ENCODE measurements at regions of chr18 and their contacts with region 1.

Region 1: DNA sequence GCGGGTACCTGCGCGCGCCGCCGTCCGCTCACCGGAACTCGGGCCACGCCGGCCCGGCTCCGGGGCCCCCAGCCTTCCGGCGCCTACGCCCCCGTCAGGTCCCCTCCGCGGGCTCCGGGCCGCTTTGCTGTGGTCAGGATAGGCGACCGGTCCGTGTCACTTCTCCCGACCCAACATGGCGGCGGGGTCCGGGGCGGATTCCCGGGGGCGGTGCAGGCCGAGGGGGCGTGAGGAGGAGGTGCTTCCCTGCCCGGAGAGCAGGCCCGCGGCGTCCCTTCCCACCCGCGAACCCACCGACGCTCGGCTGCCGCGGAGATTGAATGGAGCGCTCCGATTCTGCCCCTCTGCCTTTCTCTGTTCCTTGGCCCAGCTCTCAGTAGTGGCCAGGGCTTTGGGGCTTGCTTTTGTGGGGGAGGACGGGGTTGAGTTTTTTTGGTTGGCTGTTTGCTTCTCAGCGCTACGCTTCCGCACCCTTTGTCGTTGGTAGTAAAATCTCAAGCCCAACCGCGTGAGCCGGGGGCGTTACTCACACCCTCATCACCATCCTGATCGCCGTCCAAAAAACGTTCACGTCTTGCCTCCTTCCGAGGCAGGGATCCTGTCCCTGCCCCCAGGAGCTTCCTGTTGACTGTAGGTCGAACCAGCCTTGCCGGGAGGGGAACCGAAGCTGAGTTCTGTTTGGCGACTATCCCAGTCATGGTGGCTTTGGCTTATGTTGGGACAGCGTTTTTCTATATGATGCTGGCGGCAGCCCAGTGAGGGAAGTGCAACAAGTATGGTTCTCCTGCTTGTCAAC is 532 bp upstream of the YES1 start:
- DNase-seq: peak; percentile 55 to 93 (median 79)
- ATAC-seq: peak; percentile 68
- H3K4me3 ChIP-seq: peak overlapping the region; percentile 80 to 90
- H3K4me3 Mint-ChIP-seq: peak overlapping the region; percentile 93
- H3K27ac ChIP-seq: peak overlapping the region; percentile 81 to 98
- H3K27ac Mint-ChIP-seq: peak overlapping the region; percentile 98
- H3K4me1 ChIP-seq: peaks cover 55% of the 10 kb centered on the region
- H3K4me1 Mint-ChIP-seq: peaks cover 71% of the 10 kb centered on the region
- H3K27me3 ChIP-seq: no peaks in the 10 kb centered on the region
- H3K27me3 Mint-ChIP-seq: no peaks in the 10 kb centered on the region
- CTCF ChIP-seq: no peak

Region 2: DNA sequence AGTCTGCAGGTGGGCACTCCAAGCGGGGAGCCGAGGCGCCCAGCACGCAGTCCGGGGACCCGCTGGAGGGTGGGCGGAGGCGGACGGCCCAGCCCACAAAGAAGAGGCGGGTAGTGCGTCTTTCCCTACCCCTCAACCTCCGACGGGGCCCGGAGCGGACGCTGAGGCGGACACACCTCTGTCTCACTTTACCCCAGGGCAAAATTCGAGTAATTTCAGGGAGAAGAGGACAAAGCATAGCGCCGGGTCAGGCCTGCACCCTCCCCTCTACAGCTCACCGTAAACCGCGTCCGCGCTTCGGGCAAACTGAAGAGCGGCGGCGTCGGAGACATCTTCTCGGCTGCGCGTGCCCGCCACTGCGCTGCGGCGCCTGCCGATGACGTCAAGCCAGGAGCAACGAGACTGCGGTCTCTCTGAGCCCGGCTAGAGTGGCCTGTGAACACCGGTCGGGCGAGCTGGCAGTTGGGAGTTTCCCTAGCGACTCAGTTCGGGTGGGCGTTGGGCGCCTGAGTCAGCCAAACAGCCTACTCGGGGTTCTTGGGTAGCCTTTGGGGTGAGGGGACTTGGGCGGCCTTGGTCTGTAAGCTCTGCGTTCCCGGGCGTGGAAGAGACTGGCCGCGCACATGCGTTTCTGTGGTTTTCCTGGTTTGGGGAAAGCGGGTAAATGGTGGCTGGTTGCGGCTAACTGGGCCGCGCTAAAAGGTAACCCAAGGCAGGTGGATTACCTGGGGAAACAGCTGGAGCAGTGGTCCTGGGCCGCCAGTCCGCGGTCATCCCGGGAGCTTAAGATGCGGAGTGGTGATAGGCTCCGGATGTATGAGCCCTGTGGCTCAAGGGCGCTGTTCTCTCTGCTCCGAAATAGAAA is 544.7 kb before region 1 on chr18 and contains the start of gene THOC1:
- CTCF ChIA-PET with region 1: no interaction called
- POLR2A ChIA-PET with region 1: no interaction called
- intact Hi-C with region 1: loop called (anchors 5 to 10 kb)
- DNase-seq: peak; percentile 87 to 96 (median 95)
- ATAC-seq: peak; percentile 90
- H3K4me3 ChIP-seq: peak within 1 kb of the TSS; percentile 90 to 98
- H3K4me3 Mint-ChIP-seq: peak within 1 kb of the TSS; percentile 99
- H3K27ac ChIP-seq: peak within 1 kb of the TSS; percentile 93 to 99
- H3K27ac Mint-ChIP-seq: peak within 1 kb of the TSS; percentile 100
- H3K4me1 ChIP-seq: peaks cover 12% of the 10 kb centered on the region
- H3K4me1 Mint-ChIP-seq: peaks cover 44% of the 10 kb centered on the region
- H3K27me3 ChIP-seq: no peaks in the 10 kb centered on the region
- H3K27me3 Mint-ChIP-seq: no peaks in the 10 kb centered on the region
- CTCF ChIP-seq: no peak
- total RNA-seq, gene THOC1: 114 to 128 TPM

Region 3: GRCh38 chr18:712401-713134 is 100.0 kb before region 1 on chr18 and contains the start of gene ENOSF1:
- CTCF ChIA-PET with region 1: interaction called, 4 read pairs
- POLR2A ChIA-PET with region 1: interaction called, 7 read pairs
- intact Hi-C with region 1: loop called (anchors 1 kb)
- DNase-seq: peak; percentile 68 to 90 (median 78)
- ATAC-seq: peak; percentile 76
- H3K4me3 ChIP-seq: peak within 1 kb of the TSS; percentile 87 to 92
- H3K4me3 Mint-ChIP-seq: peak within 1 kb of the TSS; percentile 84
- H3K27ac ChIP-seq: peak within 1 kb of the TSS; percentile 83 to 96
- H3K27ac Mint-ChIP-seq: peak within 1 kb of the TSS; percentile 93
- H3K4me1 ChIP-seq: peaks cover 17% of the 10 kb centered on the region
- H3K4me1 Mint-ChIP-seq: peaks cover 32% of the 10 kb centered on the region
- H3K27me3 ChIP-seq: no peaks in the 10 kb centered on the region
- H3K27me3 Mint-ChIP-seq: no peaks in the 10 kb centered on the region
- CTCF ChIP-seq: peak; percentile 67
- total RNA-seq, gene ENOSF1: 32.2 to 39.7 TPM

Region 4: DNA sequence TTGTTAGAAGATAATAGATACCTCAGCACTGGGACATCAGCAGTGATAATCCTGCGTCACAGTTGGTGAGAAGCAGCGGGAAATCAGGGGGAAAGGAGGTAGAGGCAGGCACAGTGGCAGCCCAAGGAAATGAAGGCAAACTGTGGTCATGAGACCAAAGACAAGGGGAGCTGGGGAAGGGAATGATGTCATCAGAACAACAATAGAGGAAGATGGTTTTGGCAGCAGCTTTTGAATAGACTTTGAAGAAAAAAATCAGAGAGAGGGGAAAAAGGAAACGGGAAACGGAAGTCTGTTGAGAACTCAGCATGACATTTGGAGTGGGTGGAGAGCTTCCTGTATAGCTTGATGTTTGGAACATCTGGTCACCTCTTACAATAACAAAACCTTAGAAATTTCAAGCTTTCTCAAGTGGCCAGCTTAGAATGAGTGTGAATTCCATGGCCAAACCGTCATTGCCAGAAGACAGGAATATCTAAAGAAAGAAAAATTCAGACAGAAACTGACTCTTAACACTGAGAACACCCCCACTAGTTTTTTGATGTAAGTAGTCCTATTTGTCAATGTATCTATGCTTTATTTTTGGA is 17.8 kb after region 1 on chr18:
- CTCF ChIA-PET with region 1: interaction called, 46 read pairs
- POLR2A ChIA-PET with region 1: interaction called, 46 read pairs
- intact Hi-C with region 1: loop called (anchors 1 to 2 kb)
- DNase-seq: peak in 6 of 9 experiments; percentile 19 to 85 (median 56)
- ATAC-seq: peak; percentile 81
- H3K4me3 ChIP-seq: peak overlapping the region in 1 of 2 experiments; percentile 22
- H3K4me3 Mint-ChIP-seq: peak overlapping the region; percentile 59
- H3K27ac ChIP-seq: peak overlapping the region; percentile 26 to 83
- H3K27ac Mint-ChIP-seq: peak overlapping the region; percentile 68
- H3K4me1 ChIP-seq: peaks cover 23% of the 10 kb centered on the region
- H3K4me1 Mint-ChIP-seq: peaks cover 26% of the 10 kb centered on the region
- H3K27me3 ChIP-seq: no peaks in the 10 kb centered on the region
- H3K27me3 Mint-ChIP-seq: no peaks in the 10 kb centered on the region
- CTCF ChIP-seq: no peak